ENCODE measurements at regions of chr17 and their contacts with region 1.

Region 1: DNA sequence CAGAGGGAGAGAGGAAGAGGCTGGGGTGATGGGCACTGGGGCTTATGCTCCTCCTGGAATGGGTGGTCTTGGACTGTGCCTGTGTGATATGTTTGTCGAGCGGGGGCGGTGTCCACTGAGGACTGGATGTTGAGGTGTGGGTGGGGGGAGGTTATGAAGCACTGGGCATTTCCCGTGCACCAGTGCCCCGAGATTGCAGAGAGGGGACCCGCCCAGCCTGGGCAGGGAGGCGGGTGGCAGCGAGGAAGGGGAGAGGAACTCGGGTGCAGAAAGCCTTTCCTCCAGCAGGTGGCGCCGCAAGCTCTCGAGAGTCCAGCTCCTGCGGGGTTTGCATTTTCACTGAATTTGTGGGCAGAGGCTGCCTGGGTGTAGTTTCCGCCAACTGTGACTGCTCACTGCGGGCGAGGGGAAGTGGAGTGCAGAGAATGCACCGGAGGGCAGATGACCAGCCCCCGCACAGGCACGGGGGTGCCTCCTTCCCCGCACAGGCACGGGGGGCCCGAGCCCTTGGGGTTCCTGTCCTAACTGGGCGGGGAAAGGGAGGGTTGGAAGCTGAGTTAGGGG is 190.6 kb downstream of the SEC14L1 start:
- DNase-seq: peak; percentile 95 to 99
- ATAC-seq: peak; percentile 92
- H3K4me3 ChIP-seq: no peak overlapping the region
- H3K27ac ChIP-seq: no peak overlapping the region
- H3K4me1 ChIP-seq: no peaks in the 10 kb centered on the region
- H3K27me3 ChIP-seq: no peaks in the 10 kb centered on the region

Region 2: DNA sequence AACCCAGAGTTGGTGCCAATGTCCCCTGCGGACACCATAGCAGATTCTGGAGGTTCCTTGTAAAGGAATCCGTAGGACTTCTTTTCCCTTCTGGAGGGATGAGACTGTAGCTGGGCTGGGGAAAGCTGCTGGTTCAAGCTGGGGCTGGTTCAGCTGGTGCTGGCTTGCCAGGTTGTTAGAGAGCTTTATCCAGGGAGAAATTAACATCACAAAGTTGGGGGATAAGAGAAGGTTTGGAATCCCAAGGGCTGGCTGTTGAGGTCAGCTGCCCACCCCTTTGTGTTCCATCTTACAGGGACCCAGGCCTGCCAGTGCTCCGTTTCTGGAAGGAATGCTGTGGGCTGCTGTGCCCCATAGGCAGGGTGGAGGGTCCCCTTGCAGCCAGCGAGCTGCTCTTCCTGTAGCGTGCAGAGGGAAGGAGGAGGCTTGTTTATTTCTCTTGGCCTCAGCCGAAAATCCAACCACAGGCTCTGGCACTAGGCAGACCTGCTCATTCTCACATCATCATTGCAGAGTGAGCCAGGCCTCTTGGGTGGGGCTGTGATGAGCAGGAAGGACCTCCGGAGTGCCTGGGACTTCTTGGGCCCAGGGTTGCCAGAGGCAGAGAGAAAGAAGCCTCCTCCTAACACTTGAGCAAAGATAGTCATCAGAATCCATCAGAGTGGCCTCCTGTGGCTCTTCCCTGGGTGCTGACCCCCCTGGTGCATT is 60.4 kb after region 1 on chr17:
- intact Hi-C with region 1: no loop called
- DNase-seq: peak; percentile 89 to 90
- ATAC-seq: peak; percentile 73
- H3K4me3 ChIP-seq: no peak overlapping the region
- H3K27ac ChIP-seq: peak overlapping the region in 1 of 2 donors; percentile 15
- H3K4me1 ChIP-seq: no peaks in the 10 kb centered on the region
- H3K27me3 ChIP-seq: no peaks in the 10 kb centered on the region

Region 3: GRCh38 chr17:77404812-77405581 is 73.6 kb after region 1 on chr17:
- intact Hi-C with region 1: loop called in 1 of 2 experiments (anchors 5 kb)
- DNase-seq: peak; percentile 88
- ATAC-seq: no peak
- H3K4me3 ChIP-seq: no peak overlapping the region
- H3K27ac ChIP-seq: peak overlapping the region; percentile 24 to 28
- H3K4me1 ChIP-seq: peaks cover 0 to 8% of the 10 kb centered on the region in 2 donors
- H3K27me3 ChIP-seq: no peaks in the 10 kb centered on the region

Region 4: DNA sequence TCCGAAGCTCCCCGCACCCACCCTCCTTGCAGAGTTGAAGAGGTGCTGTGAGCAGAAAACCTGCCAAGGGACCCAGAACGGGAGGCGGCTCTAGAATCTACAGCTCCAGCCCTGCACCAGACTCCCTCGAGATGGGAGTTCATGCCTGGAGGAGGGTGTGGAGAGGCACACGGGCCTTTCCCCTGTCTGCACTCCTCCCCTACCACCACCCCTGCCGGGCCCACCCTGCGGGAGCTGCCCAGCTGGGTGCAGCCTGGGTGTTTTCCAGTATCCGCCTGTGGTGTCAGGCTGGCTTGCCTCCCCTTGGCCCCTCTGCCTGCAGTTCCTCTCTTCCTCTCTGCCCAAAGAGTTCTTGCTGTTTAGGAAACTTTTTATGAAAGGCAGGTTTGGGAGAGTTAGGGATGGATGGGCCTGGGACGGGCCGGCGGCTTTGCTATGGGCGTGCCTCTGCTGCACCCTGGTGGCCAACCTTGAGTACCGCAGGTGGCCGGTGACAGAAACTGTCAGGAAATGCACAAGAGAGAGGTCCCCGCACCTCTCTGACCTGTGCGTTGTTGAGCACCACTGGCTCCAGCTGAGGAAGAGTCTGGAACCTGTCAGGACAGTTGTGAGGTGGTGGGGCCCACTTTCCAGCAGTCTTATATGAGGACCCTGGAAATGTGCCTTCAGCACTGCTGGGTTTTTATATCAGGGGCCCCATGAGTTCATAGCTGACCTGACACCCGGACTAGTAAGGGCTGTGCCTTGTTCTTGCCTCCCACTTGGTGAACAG is 163.5 kb after region 1 on chr17:
- intact Hi-C with region 1: loop called (anchors 1 kb)
- DNase-seq: peak; percentile 82 to 91
- ATAC-seq: peak; percentile 86
- H3K4me3 ChIP-seq: no peak overlapping the region
- H3K27ac ChIP-seq: no peak overlapping the region
- H3K4me1 ChIP-seq: no peaks in the 10 kb centered on the region
- H3K27me3 ChIP-seq: no peaks in the 10 kb centered on the region

Measured in aorta (tissue), 5 donors.